ENCODE measurements at regions of chr10 and their contacts with region 1.

Region 1: GRCh38 chr10:27155066-27155754 is at the start of gene MASTL:
- DNase-seq: peak; percentile 87
- H3K4me3 ChIP-seq: peak within 1 kb of the TSS; percentile 97
- H3K27ac ChIP-seq: peak within 1 kb of the TSS; percentile 100
- H3K27me3 ChIP-seq: no peaks in the 10 kb centered on the region
- CTCF ChIP-seq: no peak
- polyA plus RNA-seq, gene MASTL: 4.2 and 4.6 TPM in 2 replicates

Region 2: GRCh38 chr10:26987851-26988337 is 167.3 kb before region 1 on chr10:
- CTCF ChIA-PET with region 1: no interaction called
- POLR2A ChIA-PET with region 1: no interaction called
- DNase-seq: no peak
- H3K4me3 ChIP-seq: no peak overlapping the region
- H3K27ac ChIP-seq: no peak overlapping the region
- H3K27me3 ChIP-seq: no peaks in the 10 kb centered on the region
- CTCF ChIP-seq: no peak

Region 3: GRCh38 chr10:27019827-27020226 is 135.4 kb before region 1 on chr10:
- CTCF ChIA-PET with region 1: no interaction called
- POLR2A ChIA-PET with region 1: no interaction called
- DNase-seq: no peak
- H3K4me3 ChIP-seq: no peak overlapping the region
- H3K27ac ChIP-seq: no peak overlapping the region
- H3K27me3 ChIP-seq: no peaks in the 10 kb centered on the region
- CTCF ChIP-seq: no peak

Region 4: GRCh38 chr10:27143686-27144085 is 11.5 kb before region 1 on chr10:
- CTCF ChIA-PET with region 1: interaction called, 4 read pairs
- POLR2A ChIA-PET with region 1: interaction called, 10 read pairs
- DNase-seq: no peak
- H3K4me3 ChIP-seq: no peak overlapping the region
- H3K27ac ChIP-seq: no peak overlapping the region
- H3K27me3 ChIP-seq: no peaks in the 10 kb centered on the region
- CTCF ChIP-seq: no peak

Region 5: DNA sequence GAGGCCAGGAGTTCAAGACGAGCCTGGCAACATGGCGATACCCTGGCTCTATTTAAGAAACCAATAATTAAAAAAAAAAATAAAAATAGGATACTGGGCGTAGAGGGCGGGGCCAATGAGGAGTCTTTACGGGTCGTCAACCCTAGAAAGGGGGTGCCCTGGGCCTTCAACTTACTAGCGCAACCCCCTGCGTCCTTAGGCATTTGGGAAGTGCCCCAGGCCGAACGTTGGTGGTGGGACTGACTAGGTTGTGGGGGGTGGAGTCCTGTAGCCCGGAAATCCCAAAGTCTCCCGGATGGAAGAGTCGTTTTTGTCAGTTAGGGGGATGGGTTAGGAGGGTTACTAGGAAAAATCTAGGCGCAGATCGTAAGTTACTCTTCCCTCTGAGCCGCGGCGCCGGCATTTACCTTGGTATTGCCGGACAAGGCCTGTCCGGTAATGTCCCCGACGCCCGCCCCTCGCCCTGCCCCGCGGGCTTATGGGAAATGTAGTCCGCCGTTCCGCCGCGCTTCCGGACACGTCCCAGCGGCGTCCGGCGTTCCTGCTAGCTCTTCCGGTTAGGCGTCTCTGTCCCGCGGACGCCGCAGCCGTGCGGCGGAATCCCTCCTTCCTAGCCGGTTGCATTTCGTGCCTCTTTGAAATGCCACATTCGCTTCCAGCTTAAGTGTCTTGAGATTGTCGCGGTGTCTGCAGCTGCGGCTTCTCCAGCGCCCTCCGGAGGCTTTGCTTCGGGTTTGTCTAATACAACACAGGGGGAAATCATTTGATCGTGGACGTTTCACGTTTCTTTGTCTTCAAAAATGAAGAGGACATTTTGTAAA is 86.7 kb after region 1 on chr10:
- CTCF ChIA-PET with region 1: interaction called, 7 read pairs
- POLR2A ChIA-PET with region 1: interaction called, 11 read pairs
- DNase-seq: peak; percentile 81
- H3K4me3 ChIP-seq: peak overlapping the region; percentile 84
- H3K27ac ChIP-seq: peak overlapping the region; percentile 96
- H3K27me3 ChIP-seq: no peaks in the 10 kb centered on the region
- CTCF ChIP-seq: peak; percentile 29; the same call in 1 of the 2 replicates

Region 6: DNA sequence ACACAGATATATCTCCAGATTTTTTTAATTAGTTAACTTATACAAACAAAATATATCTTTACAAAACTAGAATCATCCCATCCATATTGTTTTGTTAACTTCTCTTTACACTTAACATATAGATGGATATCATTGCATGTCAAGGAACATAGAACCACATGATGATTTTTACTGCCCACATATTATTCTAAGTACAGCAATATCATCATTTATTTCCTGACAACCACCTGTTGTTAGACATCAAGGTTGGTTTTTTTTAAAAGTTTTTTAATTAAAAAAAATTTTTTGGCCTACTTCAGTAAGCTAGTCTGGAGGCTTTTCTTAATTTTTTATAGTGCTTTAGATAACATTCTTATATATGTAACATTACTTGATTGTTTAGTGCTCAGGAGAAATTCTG is 1483.2 kb after region 1 on chr10:
- CTCF ChIA-PET with region 1: no interaction called
- POLR2A ChIA-PET with region 1: interaction called, 10 read pairs
- DNase-seq: no peak
- H3K4me3 ChIP-seq: no peak overlapping the region
- H3K27ac ChIP-seq: no peak overlapping the region
- H3K27me3 ChIP-seq: peaks cover 11% of the 10 kb centered on the region
- CTCF ChIP-seq: no peak

Measured in AG04450 (cell line).